ENCODE measurements at regions of chr6 and their contacts with region 1.

Region 1: DNA sequence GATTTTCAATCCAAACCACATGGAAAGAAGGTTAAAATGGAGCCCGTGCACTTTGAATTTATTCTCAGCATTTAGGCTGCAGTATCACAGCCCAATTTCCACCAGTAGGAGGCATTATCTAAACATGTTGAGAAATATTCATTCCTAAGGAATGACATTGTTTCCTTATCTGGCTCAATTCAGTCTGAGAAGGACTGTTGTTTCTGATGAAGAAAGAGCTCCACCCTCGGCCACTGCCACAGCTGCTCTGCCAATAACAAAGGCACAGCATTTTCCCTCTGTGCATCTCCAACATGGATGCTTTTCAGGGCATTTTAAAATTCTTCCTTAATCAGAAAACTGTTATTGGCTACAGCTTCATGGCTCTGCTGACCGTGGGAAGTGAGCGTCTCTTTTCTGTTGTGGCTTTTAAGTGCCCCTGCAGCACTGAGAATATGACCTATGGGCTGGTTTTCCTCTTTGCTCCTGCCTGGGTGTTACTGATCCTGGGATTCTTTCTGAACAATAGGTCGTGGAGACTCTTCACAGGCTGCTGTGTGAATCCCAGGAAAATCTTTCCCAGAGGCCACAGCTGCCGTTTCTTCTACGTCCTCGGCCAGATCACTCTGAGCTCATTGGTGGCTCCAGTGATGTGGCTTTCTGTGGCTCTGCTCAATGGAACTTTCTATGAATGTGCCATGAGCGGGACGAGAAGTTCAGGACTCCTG is at the start of gene CALHM5:
- DNase-seq: peak; percentile 41 to 65
- H3K4me3 ChIP-seq: no peak within 1 kb of the TSS
- H3K4me3 Mint-ChIP-seq: peak within 1 kb of the TSS; percentile 54
- H3K27ac Mint-ChIP-seq: peak within 1 kb of the TSS; percentile 61
- H3K4me1 ChIP-seq: 0 out of 2 replicates have a peak, but pooled peaks cover 6% of the 10 kb centered on the region
- H3K4me1 Mint-ChIP-seq: peaks cover 11% of the 10 kb centered on the region
- H3K27me3 ChIP-seq: no peaks in the 10 kb centered on the region
- H3K27me3 Mint-ChIP-seq: no peaks in the 10 kb centered on the region
- CTCF ChIP-seq: peak; percentile 33 to 34
- total RNA-seq, gene CALHM5: 1.1 and 1.3 TPM in 2 replicates

Region 2: DNA sequence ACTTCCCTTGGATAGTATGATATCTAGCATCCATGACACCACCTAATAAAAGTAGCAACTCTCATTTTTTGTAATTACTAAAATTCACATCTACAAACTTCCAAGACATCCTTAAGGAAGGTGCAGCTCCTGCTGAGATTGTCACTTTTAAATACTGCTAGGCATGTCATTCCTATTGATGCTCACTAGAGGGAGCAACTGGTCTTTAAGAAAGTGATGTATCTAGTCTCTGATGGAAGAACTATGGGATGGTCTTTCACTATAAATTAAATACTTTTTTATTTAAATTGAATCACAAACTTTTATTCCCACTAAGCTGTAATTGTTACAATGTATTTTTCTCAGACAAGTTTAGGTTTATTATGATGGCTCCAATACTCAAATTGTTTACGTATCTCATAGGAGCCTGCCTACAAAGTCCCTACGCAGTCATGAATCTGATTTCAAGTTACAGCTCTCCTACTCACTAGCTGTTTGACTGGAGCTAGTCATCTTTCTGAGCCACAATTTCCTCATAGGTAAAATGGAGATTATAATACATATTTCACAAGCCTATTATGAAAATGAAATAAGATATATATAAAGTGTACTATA is 223.8 kb before region 1 on chr6:
- CTCF ChIA-PET with region 1: interaction called, 3 read pairs
- POLR2A ChIA-PET with region 1: interaction called, 3 read pairs
- intact Hi-C with region 1: loop called (anchors 5 kb)
- DNase-seq: peak in 1 of 2 experiments; percentile 17
- H3K4me3 ChIP-seq: no peak overlapping the region
- H3K4me3 Mint-ChIP-seq: no peak overlapping the region
- H3K27ac Mint-ChIP-seq: no peak overlapping the region
- H3K4me1 ChIP-seq: no peaks in the 10 kb centered on the region
- H3K4me1 Mint-ChIP-seq: no peaks in the 10 kb centered on the region
- H3K27me3 ChIP-seq: no peaks in the 10 kb centered on the region
- H3K27me3 Mint-ChIP-seq: no peaks in the 10 kb centered on the region
- CTCF ChIP-seq: peak; percentile 76 to 81

Region 3: GRCh38 chr6:116444092-116444491 is 67.5 kb before region 1 on chr6:
- CTCF ChIA-PET with region 1: interaction called, 3 read pairs
- POLR2A ChIA-PET with region 1: no interaction called
- intact Hi-C with region 1: loop called (anchors 2 kb)
- DNase-seq: no peak
- H3K4me3 ChIP-seq: no peak overlapping the region
- H3K4me3 Mint-ChIP-seq: no peak overlapping the region
- H3K27ac Mint-ChIP-seq: no peak overlapping the region
- H3K4me1 ChIP-seq: no peaks in the 10 kb centered on the region
- H3K4me1 Mint-ChIP-seq: no peaks in the 10 kb centered on the region
- H3K27me3 ChIP-seq: no peaks in the 10 kb centered on the region; the same call in 1 of the 2 replicates
- H3K27me3 Mint-ChIP-seq: peaks cover 16% of the 10 kb centered on the region
- CTCF ChIP-seq: peak; percentile 44 to 48

Region 4: DNA sequence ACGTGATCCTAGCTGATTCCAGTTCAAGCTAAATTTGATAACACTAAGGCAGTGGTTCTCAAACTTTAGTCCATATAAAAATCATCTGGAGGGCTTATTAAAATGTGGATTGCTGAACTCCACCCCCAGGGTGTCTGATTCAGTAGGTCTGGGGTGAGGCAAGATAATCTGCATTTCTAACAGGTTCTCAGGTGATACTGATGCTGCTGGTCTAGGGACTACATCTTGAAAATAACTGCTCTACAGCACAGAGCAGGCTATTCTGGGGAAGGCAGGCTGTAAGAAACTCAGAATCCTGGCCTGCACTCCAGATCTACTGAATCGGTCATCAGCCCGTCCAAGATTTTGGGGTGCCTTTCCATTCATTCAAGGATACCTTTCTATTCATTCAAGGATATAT is 11.3 kb after region 1 on chr6:
- CTCF ChIA-PET with region 1: interaction called, 12 read pairs
- POLR2A ChIA-PET with region 1: no interaction called
- intact Hi-C with region 1: no loop called
- DNase-seq: no peak
- H3K4me3 ChIP-seq: no peak overlapping the region
- H3K4me3 Mint-ChIP-seq: no peak overlapping the region
- H3K27ac Mint-ChIP-seq: no peak overlapping the region
- H3K4me1 ChIP-seq: peaks cover 29% of the 10 kb centered on the region
- H3K4me1 Mint-ChIP-seq: peaks cover 16% of the 10 kb centered on the region
- H3K27me3 ChIP-seq: no peaks in the 10 kb centered on the region
- H3K27me3 Mint-ChIP-seq: no peaks in the 10 kb centered on the region
- CTCF ChIP-seq: no peak

Region 5: GRCh38 chr6:116531675-116532570 is 20.4 kb after region 1 on chr6:
- CTCF ChIA-PET with region 1: interaction called, 14 read pairs
- POLR2A ChIA-PET with region 1: interaction called, 4 read pairs
- intact Hi-C with region 1: loop called (anchors 1 kb)
- DNase-seq: peak in 1 of 2 experiments; percentile 63
- H3K4me3 ChIP-seq: no peak overlapping the region
- H3K4me3 Mint-ChIP-seq: no peak overlapping the region
- H3K27ac Mint-ChIP-seq: no peak overlapping the region
- H3K4me1 ChIP-seq: peaks cover 37% of the 10 kb centered on the region
- H3K4me1 Mint-ChIP-seq: peaks cover 37% of the 10 kb centered on the region
- H3K27me3 ChIP-seq: no peaks in the 10 kb centered on the region
- H3K27me3 Mint-ChIP-seq: no peaks in the 10 kb centered on the region
- CTCF ChIP-seq: peak; percentile 63 to 67

Region 6: GRCh38 chr6:116561377-116562018 is 49.9 kb after region 1 on chr6:
- CTCF ChIA-PET with region 1: interaction called, 13 read pairs
- POLR2A ChIA-PET with region 1: no interaction called
- intact Hi-C with region 1: loop called (anchors 1 kb)
- DNase-seq: peak; percentile 68 to 73
- H3K4me3 ChIP-seq: no peak overlapping the region
- H3K4me3 Mint-ChIP-seq: no peak overlapping the region
- H3K27ac Mint-ChIP-seq: no peak overlapping the region
- H3K4me1 ChIP-seq: peaks cover 15% of the 10 kb centered on the region
- H3K4me1 Mint-ChIP-seq: peaks cover 26% of the 10 kb centered on the region
- H3K27me3 ChIP-seq: no peaks in the 10 kb centered on the region
- H3K27me3 Mint-ChIP-seq: no peaks in the 10 kb centered on the region
- CTCF ChIP-seq: peak; percentile 70 to 91

Region 7: GRCh38 chr6:116570856-116571682 is 59.5 kb after region 1 on chr6 and contains the start of gene RWDD1:
- CTCF ChIA-PET with region 1: interaction called, 10 read pairs
- POLR2A ChIA-PET with region 1: interaction called, 3 read pairs
- intact Hi-C with region 1: no loop called
- DNase-seq: peak; percentile 99
- H3K4me3 ChIP-seq: peak within 1 kb of the TSS; percentile 96
- H3K4me3 Mint-ChIP-seq: peak within 1 kb of the TSS; percentile 98
- H3K27ac Mint-ChIP-seq: peak within 1 kb of the TSS; percentile 99
- H3K4me1 ChIP-seq: peaks cover 6% of the 10 kb centered on the region; the same call in 1 of the 2 replicates
- H3K4me1 Mint-ChIP-seq: peaks cover 7% of the 10 kb centered on the region
- H3K27me3 ChIP-seq: no peaks in the 10 kb centered on the region
- H3K27me3 Mint-ChIP-seq: no peaks in the 10 kb centered on the region
- CTCF ChIP-seq: no peak
- total RNA-seq, gene RWDD1: 35.0 and 37.9 TPM in 2 replicates

Measured in Caco-2 (cell line).